Aorta (tissue), 5 donors: ENCODE measurements at regions of chr15 and their contacts with region 1.

Region 1: DNA sequence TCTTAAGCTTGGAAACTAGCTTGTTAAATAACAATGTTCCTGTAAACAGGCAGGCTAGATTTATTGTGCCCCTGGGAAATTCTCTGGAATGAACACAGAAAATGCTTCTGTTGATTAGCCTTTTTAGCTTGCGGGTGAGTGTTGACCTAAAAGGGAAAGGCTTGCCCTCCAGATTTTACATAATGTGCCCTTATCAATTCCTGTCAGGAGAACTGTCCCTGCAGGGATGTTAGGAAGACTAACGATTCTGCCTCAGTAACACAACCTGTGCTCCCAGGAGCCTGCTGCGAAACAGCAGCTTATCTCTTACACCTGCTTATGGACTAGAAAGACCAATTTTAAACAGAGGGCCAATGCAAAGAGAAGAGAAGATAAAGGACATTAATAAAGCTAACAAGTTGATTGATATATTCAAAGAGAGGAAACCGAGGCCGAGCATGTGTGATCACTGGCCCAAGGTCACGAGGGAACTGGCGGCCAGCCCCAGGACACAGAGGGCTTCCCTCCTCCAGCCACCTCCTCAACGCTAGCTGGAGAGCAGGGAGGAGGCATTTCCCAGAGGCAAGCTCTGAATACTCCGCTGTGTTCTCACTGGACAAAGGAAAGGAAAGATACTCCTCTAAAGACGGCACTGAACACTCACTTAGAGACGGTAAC is 48.4 kb upstream of the TJP1 start:
- DNase-seq: no peak
- ATAC-seq: peak; percentile 65
- H3K4me3 ChIP-seq: no peak overlapping the region
- H3K27ac ChIP-seq: peak overlapping the region in 1 of 2 donors; percentile 86
- H3K4me1 ChIP-seq: peaks cover under 1 to 6% of the 10 kb centered on the region in 2 donors
- H3K27me3 ChIP-seq: no peaks in the 10 kb centered on the region

Region 2: GRCh38 chr15:29631076-29632070 is 239.2 kb before region 1 on chr15:
- intact Hi-C with region 1: loop called in 1 of 2 experiments (anchors 5 kb)
- DNase-seq: no peak
- ATAC-seq: peak; percentile 29
- H3K4me3 ChIP-seq: no peak overlapping the region
- H3K27ac ChIP-seq: no peak overlapping the region
- H3K4me1 ChIP-seq: no peaks in the 10 kb centered on the region
- H3K27me3 ChIP-seq: no peaks in the 10 kb centered on the region

Region 3: DNA sequence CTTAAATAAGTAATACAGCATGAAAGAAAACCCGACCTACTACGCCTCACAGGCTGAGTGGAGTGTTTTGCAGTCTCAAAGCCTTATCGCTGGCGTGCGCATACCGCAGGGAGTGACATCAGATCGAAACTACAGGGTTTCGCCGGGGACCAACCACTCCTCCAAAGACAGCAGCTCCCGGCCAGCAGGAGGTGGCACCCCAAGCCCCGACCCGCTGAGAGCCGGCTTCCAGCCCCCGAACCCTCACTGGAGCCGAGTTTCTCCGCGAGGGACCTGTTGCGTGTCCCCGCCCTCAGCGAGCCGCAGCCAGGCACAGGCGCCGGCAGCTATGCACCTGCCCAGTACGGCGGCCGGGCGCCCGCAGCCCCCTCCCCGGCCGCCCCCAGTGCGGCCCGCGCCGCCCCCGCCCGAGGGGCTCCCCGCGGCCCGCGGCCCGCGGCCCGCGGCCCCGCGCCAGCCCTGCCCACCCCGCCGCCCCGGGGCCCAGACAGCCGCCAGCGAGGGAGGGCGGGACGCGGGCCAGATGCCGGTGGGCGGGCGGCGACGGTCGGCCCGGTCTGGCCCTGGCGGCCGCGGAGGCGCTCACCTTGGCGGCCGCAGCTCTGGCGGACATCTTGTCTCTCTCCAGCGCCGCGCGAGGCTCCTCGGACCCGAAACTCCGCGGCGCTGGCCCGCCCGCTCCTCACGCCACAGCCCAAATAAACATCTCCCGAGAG is 49.0 kb before region 1 on chr15:
- intact Hi-C with region 1: loop called (anchors 5 kb)
- DNase-seq: peak; percentile 77 to 90
- ATAC-seq: peak; percentile 65
- H3K4me3 ChIP-seq: peak overlapping the region; percentile 91 to 93
- H3K27ac ChIP-seq: peak overlapping the region; percentile 62 to 90
- H3K4me1 ChIP-seq: no peaks in the 10 kb centered on the region
- H3K27me3 ChIP-seq: no peaks in the 10 kb centered on the region

Region 4: GRCh38 chr15:29935276-29936020 is 64.8 kb after region 1 on chr15:
- intact Hi-C with region 1: no loop called
- DNase-seq: no peak
- ATAC-seq: no peak
- H3K4me3 ChIP-seq: no peak overlapping the region
- H3K27ac ChIP-seq: no peak overlapping the region
- H3K4me1 ChIP-seq: no peaks in the 10 kb centered on the region
- H3K27me3 ChIP-seq: no peaks in the 10 kb centered on the region